ENCODE measurements at regions of chr3 and their contacts with region 1.

Region 1: GRCh38 chr3:32374788-32375595 is 16.7 kb upstream of the CMTM7 start:
- DNase-seq: peak; percentile 83
- ATAC-seq: peak; percentile 68
- H3K4me3 Mint-ChIP-seq: no peak overlapping the region
- H3K27ac Mint-ChIP-seq: no peak overlapping the region
- H3K4me1 Mint-ChIP-seq: peaks cover 24% of the 10 kb centered on the region
- H3K27me3 Mint-ChIP-seq: no peaks in the 10 kb centered on the region
- CTCF ChIP-seq: peak; percentile 76

Region 2: DNA sequence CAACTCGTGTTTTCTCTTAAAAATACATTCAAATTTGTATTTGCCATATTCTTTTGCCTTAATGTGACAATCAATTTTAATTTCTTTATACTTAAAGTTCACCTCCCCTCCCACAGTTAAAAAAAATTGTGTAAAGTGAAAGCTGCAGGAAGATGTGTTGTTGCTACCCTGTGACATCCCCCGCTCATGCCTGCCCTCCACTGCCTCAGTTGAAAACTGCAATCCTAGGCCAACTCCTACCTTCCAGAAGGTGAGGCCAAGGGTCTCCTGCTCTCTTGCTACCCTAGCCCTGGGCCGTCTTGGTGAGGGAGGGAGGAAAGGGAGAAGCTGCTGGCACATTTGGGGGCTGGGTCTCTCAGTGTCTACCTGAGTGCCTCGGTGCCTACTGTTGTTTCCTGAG is 40.3 kb before region 1 on chr3:
- CTCF ChIA-PET with region 1: interaction called, 10 read pairs
- POLR2A ChIA-PET with region 1: no interaction called
- intact Hi-C with region 1: no loop called
- DNase-seq: peak; percentile 61
- ATAC-seq: peak; percentile 81
- H3K4me3 Mint-ChIP-seq: no peak overlapping the region
- H3K27ac Mint-ChIP-seq: no peak overlapping the region
- H3K4me1 Mint-ChIP-seq: peaks cover 21% of the 10 kb centered on the region
- H3K27me3 Mint-ChIP-seq: no peaks in the 10 kb centered on the region
- CTCF ChIP-seq: peak; percentile 60

Region 3: DNA sequence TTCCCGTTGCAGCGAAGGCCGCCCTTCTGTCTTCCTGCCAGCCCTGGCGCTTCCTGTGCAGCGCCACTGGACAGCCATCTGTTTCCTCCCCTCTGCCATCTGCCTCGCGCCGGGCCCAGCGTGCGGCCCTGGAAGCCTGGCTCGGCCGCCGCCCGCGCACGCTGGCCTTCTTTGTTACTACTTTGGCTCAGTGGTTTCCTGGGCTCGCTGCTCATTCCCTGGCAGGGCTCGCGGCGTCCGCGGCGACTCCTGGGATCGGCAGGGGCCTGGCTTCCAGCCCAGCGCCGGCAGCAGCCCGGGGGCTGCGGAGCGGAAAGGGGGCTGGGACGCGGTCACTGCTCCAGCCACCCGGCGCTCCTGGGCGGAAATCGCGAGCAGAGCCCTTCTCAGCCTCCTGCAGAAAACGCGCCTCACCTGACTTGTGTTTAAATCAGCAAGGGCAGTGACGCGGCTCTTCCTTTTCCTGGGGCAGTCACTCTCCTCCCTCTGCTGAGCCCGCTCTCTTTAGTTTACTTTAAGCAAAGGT is 26.6 kb after region 1 on chr3:
- CTCF ChIA-PET with region 1: interaction called, 69 read pairs
- POLR2A ChIA-PET with region 1: no interaction called
- intact Hi-C with region 1: no loop called
- DNase-seq: peak; percentile 78
- ATAC-seq: peak; percentile 77
- H3K4me3 Mint-ChIP-seq: peak overlapping the region; percentile 91
- H3K27ac Mint-ChIP-seq: peak overlapping the region; percentile 100
- H3K4me1 Mint-ChIP-seq: peaks cover 71% of the 10 kb centered on the region
- H3K27me3 Mint-ChIP-seq: no peaks in the 10 kb centered on the region
- CTCF ChIP-seq: no peak

Region 4: DNA sequence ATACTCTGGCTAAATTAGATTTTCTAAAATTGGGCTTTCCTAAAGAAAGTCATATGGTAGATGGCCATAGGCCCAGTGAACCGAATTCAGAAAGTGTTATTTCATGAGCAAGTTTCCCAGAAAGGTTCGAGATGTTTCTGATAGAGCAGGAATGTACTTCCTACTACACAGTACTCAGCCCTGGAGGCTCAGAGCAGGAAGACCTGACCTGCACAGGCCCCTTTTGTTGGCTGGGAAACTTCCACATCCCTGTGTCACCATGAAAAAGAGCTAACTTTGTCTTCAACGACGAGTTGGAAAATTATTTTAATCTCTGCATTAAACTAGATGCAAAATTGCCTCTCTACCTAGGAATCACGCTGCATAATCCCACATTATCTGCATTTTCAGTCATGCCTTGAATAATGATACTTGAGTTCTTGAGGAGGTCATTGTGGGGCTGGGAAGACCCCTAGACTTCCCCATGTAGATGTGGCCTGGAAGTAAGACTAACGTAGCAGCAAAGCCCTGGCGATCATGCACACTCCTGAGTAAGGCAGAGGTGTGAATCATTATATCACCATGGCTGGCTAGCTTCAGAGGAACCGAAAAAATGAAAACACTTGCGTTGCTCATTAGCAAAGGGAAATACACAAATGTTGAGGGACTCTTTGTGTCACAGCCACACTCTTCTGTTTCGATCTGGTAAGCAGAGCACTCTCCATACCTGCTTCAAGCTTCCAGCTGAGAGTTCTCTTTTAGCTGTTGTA is 63.8 kb after region 1 on chr3:
- CTCF ChIA-PET with region 1: interaction called, 16 read pairs
- POLR2A ChIA-PET with region 1: no interaction called
- intact Hi-C with region 1: no loop called
- DNase-seq: peak; percentile 64
- ATAC-seq: peak; percentile 77
- H3K4me3 Mint-ChIP-seq: peak overlapping the region; percentile 11
- H3K27ac Mint-ChIP-seq: peak overlapping the region; percentile 81
- H3K4me1 Mint-ChIP-seq: peaks cover 83% of the 10 kb centered on the region
- H3K27me3 Mint-ChIP-seq: no peaks in the 10 kb centered on the region
- CTCF ChIP-seq: no peak

Region 5: GRCh38 chr3:32474201-32474600 is 99.2 kb after region 1 on chr3:
- CTCF ChIA-PET with region 1: interaction called, 149 read pairs
- POLR2A ChIA-PET with region 1: no interaction called
- intact Hi-C with region 1: no loop called
- DNase-seq: no peak
- ATAC-seq: no peak
- H3K4me3 Mint-ChIP-seq: no peak overlapping the region
- H3K27ac Mint-ChIP-seq: no peak overlapping the region
- H3K4me1 Mint-ChIP-seq: peaks cover 35% of the 10 kb centered on the region
- H3K27me3 Mint-ChIP-seq: no peaks in the 10 kb centered on the region
- CTCF ChIP-seq: no peak